HepG2 (cell line): ENCODE measurements at regions of chr10 and their contacts with region 1.

Region 1: DNA sequence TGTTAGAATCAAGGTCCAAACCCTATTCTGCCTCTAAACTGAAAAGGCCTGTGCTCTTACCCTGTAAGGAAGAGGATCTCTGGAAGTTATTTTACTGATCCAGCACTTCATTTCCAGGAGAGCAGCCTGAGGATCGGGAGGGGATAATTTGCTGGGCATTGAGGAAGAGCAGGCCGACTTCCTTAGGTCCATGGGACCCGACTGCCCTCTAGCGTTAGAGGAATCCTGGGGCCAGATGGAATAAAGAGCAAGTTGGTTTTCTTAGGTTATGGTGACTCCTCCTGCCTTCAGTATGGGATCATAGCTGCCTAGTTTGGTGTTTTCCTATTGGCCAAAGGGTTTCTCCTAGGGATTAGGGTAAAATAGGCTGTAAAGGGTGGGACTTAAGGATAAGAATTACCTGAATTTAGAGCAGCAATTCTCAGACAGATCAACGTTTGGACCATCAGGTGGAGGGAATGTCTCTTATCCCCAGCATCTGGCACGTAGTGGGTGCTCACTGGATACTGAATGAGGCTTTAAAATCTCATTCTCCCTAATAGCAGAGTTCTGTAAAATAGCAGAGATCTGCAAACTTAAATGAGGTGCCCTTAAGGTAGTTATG is 40.0 kb upstream of the SORBS1 start:
- DNase-seq: peak; percentile 84
- ATAC-seq: peak; percentile 88
- H3K4me3 ChIP-seq: no peak overlapping the region
- H3K27ac ChIP-seq: no peak overlapping the region
- H3K4me1 ChIP-seq: peaks cover 48% of the 10 kb centered on the region
- H3K27me3 ChIP-seq: no peaks in the 10 kb centered on the region; a peak in 1 of 5 replicates
- CTCF ChIP-seq: peak; percentile 97
- EP300 ChIP-seq: no peak
- POLR2A ChIP-seq: no peak
- RAD21 ChIP-seq: peak; percentile 96

Region 2: DNA sequence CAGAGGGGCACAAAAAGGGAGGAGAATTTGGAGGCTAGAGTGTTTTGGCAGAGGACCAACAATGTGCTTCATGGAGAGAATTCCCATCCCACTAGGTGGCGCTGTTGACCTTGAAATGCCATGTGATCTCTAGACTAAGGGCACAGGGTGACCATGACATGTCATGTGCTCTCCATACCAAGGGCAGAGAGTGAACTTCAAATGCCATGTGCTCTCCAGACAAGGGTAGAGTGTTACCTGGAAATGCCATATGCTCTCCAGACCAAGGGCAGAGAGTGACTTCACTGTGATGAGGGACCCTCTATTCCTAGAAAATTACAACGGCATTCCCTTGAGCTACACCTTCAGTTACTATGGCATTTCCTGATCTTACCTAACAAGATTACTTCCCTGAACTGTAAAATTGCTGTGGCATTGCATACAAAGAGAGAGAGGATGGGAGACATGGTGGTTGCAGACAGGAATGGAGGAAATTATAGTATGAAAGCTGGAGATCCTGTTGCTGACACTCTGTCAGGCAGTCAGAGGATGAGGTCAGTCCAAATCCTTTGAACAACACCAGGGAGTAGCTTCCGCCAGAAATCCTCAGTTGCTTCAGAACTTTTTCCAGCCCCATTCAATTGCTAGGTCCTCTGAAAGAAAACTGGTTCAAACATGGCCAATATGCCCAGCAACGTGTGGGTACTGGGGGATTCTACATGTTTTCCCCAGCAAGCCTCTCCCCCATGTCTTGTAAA is 468.0 kb before region 1 on chr10:
- CTCF ChIA-PET with region 1: no interaction called
- POLR2A ChIA-PET with region 1: no interaction called
- in situ Hi-C with region 1: loop called (anchors 25 kb)
- intact Hi-C with region 1: loop called (anchors 10 kb)
- DNase-seq: peak; percentile 88
- ATAC-seq: peak; percentile 97
- H3K4me3 ChIP-seq: no peak overlapping the region
- H3K27ac ChIP-seq: no peak overlapping the region
- H3K4me1 ChIP-seq: peaks cover 37% of the 10 kb centered on the region
- H3K27me3 ChIP-seq: no peaks in the 10 kb centered on the region
- CTCF ChIP-seq: peak; percentile 98
- EP300 ChIP-seq: peak in 1 of 2 experiments; percentile 57; a peak in 1 of 4 replicates
- POLR2A ChIP-seq: no peak
- RAD21 ChIP-seq: peak; percentile 89

Region 3: GRCh38 chr10:95430231-95430951 is 170.8 kb before region 1 on chr10:
- CTCF ChIA-PET with region 1: interaction called, 96 read pairs
- POLR2A ChIA-PET with region 1: interaction called, 3 read pairs
- in situ Hi-C with region 1: loop called (anchors 5 kb)
- intact Hi-C with region 1: loop called (anchors 1 kb)
- DNase-seq: peak; percentile 65
- ATAC-seq: peak; percentile 94
- H3K4me3 ChIP-seq: no peak overlapping the region
- H3K27ac ChIP-seq: no peak overlapping the region
- H3K4me1 ChIP-seq: peaks cover 17% of the 10 kb centered on the region
- H3K27me3 ChIP-seq: no peaks in the 10 kb centered on the region
- CTCF ChIP-seq: peak; percentile 93
- EP300 ChIP-seq: no peak
- POLR2A ChIP-seq: no peak
- RAD21 ChIP-seq: peak; percentile 95

Region 4: DNA sequence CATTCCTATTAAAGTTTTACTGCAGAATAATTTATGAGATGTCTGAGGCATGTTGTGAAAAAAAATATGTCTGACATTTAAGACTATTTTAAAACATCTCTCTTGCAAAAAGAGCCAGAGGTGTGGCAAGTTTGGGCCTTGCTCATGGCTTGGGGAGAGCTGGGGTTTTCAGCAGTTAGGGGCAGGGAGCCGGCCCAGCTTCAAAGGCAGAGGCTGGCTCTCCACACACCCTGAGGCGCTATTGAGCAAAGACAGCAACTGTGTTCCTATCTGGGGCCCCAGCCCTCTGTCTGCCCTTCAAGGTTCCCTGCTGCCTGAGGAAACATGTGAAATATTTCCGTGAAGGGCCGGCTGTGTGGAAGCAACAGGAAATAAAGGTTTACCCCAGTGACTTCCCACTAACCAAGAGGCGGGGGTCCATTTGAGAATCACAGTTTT is 134.0 kb before region 1 on chr10:
- CTCF ChIA-PET with region 1: interaction called, 7 read pairs
- POLR2A ChIA-PET with region 1: no interaction called
- in situ Hi-C with region 1: no loop called
- intact Hi-C with region 1: loop called (anchors 1 kb)
- DNase-seq: peak; percentile 83
- ATAC-seq: peak; percentile 99
- H3K4me3 ChIP-seq: no peak overlapping the region
- H3K27ac ChIP-seq: peak overlapping the region; percentile 65
- H3K4me1 ChIP-seq: peaks cover 92% of the 10 kb centered on the region
- H3K27me3 ChIP-seq: no peaks in the 10 kb centered on the region
- CTCF ChIP-seq: peak; percentile 82
- EP300 ChIP-seq: peak in 1 of 2 experiments; percentile 88; a peak in 2 of 4 replicates
- POLR2A ChIP-seq: no peak
- RAD21 ChIP-seq: peak; percentile 84

Region 5: GRCh38 chr10:95561182-95562075 is 39.8 kb before region 1 on chr10 and contains the start of gene SORBS1:
- CTCF ChIA-PET with region 1: no interaction called
- POLR2A ChIA-PET with region 1: no interaction called
- in situ Hi-C with region 1: no loop called
- intact Hi-C with region 1: loop called (anchors 5 kb)
- DNase-seq: peak; percentile 93
- ATAC-seq: peak; percentile 96
- H3K4me3 ChIP-seq: peak within 1 kb of the TSS; percentile 82 to 98 (median 91)
- H3K27ac ChIP-seq: peak within 1 kb of the TSS; percentile 41
- H3K4me1 ChIP-seq: peaks cover 88% of the 10 kb centered on the region
- H3K27me3 ChIP-seq: no peaks in the 10 kb centered on the region; a peak in 1 of 5 replicates
- CTCF ChIP-seq: no peak
- EP300 ChIP-seq: no peak
- POLR2A ChIP-seq: peak; percentile 69 to 84
- RAD21 ChIP-seq: no peak; the same call in 1 of the 2 replicates
- total RNA-seq, gene SORBS1: 16.8 and 21.0 TPM in 2 replicates